ENCODE measurements at regions of chr11 and their contacts with region 1.

Region 1: GRCh38 chr11:132402071-132402684 is 1031.8 kb downstream of the NTM start:
- DNase-seq: no peak
- H3K4me3 ChIP-seq: no peak overlapping the region
- H3K27ac ChIP-seq: no peak overlapping the region
- H3K4me1 ChIP-seq: no peaks in the 10 kb centered on the region
- H3K27me3 ChIP-seq: no peaks in the 10 kb centered on the region
- CTCF ChIP-seq: peak in 2 of 3 experiments; percentile 41 to 59

Region 2: DNA sequence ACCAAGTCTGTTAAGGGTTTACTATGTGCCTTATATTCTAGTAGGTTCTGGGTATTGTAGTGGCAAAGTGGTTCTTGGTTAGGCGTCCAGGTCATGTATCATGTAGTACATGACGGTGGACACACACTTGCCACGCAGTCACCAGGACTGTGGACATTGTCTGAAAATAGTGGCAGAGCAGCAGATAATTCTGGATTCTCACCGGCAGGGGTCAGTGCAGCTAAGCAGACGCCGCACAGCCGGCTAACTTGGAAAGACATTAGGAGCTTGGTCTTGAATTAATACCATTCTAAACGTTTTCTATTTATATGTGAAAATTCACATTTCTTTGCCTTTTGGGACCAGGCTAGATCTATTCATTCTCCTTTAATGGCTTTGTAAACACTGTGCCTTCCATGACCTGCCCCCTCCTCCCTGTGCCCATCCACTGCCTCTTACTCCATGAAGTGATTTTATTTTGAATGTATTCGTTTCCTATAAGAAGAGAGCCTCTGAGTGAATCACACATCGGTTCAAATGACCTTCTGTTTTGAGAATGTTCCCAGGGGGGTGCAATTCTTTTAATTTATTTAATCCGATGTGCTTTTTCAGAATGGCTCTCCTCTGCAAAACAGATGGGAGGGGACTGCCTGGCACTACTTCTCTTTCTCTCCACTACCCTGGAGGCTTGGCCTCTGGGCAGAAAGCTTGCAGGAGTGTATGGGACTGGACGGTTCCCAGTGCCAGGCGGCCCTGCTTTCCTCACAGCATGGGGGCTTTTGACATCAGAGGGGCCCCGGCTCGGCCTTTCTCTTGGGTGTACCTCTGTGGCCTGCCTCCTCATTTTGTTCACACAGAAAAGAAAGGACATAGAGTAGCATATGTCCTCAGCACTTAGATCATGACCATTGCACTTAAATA is 653.8 kb before region 1 on chr11:
- dilution Hi-C with region 1: loop called (anchors 25 kb)
- DNase-seq: peak; percentile 17
- H3K4me3 ChIP-seq: no peak overlapping the region
- H3K27ac ChIP-seq: no peak overlapping the region
- H3K4me1 ChIP-seq: no peaks in the 10 kb centered on the region
- H3K27me3 ChIP-seq: no peaks in the 10 kb centered on the region
- CTCF ChIP-seq: peak; percentile 82 to 88 (median 88)